H1 (cell line): ENCODE measurements at regions of chr2 and their contacts with region 1.

Region 1: GRCh38 chr2:108448678-108449493 is at the start of gene GCC2:
- DNase-seq: peak; percentile 93 to 95
- H3K4me3 ChIP-seq: peak within 1 kb of the TSS; percentile 80 to 95 (median 84)
- H3K27ac ChIP-seq: peak within 1 kb of the TSS; percentile 82
- H3K4me1 ChIP-seq: peaks cover 0 to 4% (median 0%) of the 10 kb centered on the region in 4 experiments; a peak in 1 of 7 replicates
- H3K27me3 ChIP-seq: no peaks in the 10 kb centered on the region
- CTCF ChIP-seq: no peak
- EP300 ChIP-seq: peak in 1 of 2 experiments; percentile 77; a peak in 1 of 3 replicates
- POLR2A ChIP-seq: peak; percentile 88 to 94
- RAD21 ChIP-seq: no peak
- total RNA-seq, gene GCC2: 52.2 and 54.9 TPM in 2 replicates

Region 2: DNA sequence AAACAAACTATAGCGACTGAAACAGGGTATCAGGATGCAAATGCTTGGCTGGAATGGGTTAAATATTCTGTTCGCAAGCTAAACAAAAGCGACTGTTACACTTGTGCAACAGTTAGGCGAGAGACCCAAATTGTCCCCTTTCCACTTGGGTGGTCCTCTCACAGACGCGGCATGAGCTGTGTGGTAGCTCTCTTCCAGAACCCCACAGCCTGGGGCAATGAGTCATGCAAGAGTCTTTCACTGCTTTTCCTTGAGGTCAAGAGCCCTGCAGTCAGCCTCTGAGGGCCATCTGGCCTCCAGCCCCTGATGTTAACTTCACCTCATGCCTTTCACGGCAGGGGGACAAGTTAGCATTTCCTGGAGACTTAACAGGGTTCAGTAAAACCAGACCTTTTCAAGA is 45.4 kb before region 1 on chr2:
- CTCF ChIA-PET with region 1: interaction called, 8 read pairs
- POLR2A ChIA-PET with region 1: interaction called, 18 read pairs
- DNase-seq: peak; percentile 64 to 66
- H3K4me3 ChIP-seq: no peak overlapping the region; a peak in 1 of 8 replicates
- H3K27ac ChIP-seq: 0 out of 2 replicates have a peak overlapping the region, but pooled peaks have one; percentile 73
- H3K4me1 ChIP-seq: peaks cover 0 to 10% (median under 1%) of the 10 kb centered on the region in 4 experiments; a peak in 1 of 7 replicates
- H3K27me3 ChIP-seq: no peaks in the 10 kb centered on the region
- CTCF ChIP-seq: no peak
- EP300 ChIP-seq: no peak
- POLR2A ChIP-seq: peak in 1 of 2 experiments; percentile 65; a peak in 2 of 3 replicates
- RAD21 ChIP-seq: no peak

Region 3: GRCh38 chr2:108428286-108429009 is 20.4 kb before region 1 on chr2:
- CTCF ChIA-PET with region 1: no interaction called
- POLR2A ChIA-PET with region 1: no interaction called
- DNase-seq: no peak
- H3K4me3 ChIP-seq: no peak overlapping the region
- H3K27ac ChIP-seq: no peak overlapping the region
- H3K4me1 ChIP-seq: no peaks in the 10 kb centered on the region
- H3K27me3 ChIP-seq: no peaks in the 10 kb centered on the region
- CTCF ChIP-seq: no peak
- EP300 ChIP-seq: no peak
- POLR2A ChIP-seq: no peak
- RAD21 ChIP-seq: no peak